ENCODE measurements at regions of chr12 and their contacts with region 1.

Region 1: GRCh38 chr12:26651566-26652188 is 181.3 kb downstream of the ITPR2 start:
- DNase-seq: peak; percentile 88
- ATAC-seq: peak; percentile 73
- H3K4me3 ChIP-seq: no peak overlapping the region
- H3K27ac ChIP-seq: no peak overlapping the region
- H3K4me1 ChIP-seq: peaks cover 9% of the 10 kb centered on the region
- H3K27me3 ChIP-seq: no peaks in the 10 kb centered on the region
- CTCF ChIP-seq: peak; percentile 94
- POLR2A ChIP-seq: no peak
- RAD21 ChIP-seq: peak; percentile 96

Region 2: DNA sequence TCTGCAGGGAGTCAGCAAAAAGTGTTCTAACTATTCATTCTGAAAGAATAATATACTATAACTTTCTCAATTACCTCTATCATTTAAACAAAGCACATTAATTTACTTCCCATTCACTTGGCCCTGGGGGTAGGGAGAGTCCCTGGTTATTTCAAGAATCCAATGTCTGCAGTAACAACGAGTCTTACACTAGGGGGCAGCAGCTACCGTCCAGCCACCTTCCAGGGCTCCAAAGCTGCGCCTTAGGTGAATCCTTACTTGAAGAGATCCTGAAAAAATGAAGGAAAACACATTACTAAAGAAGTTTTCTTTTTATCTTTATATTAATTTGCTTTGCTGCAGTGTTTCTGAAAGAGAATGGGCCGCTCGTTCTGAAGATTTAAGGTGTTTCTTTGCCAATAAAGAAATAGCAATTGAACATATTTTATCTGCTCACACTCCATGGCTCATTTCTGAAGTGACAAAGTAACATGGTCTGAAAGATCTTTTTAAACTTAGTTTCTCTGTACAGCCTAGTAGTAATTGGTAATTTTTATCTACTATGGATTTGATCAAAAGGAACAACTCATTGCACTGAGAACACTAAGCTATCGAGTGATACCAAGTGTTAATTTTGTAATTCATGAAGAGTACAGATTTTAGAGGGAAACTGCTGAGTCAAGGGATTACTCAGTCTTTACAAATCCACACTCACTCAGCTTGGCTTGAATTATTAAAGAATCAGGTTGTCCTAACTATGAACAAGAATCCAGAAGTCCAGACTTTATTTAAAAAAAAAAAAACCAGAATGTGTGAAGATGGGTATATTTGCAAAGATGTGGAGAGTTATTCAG is 554.4 kb before region 1 on chr12:
- CTCF ChIA-PET with region 1: interaction called, 3 read pairs
- POLR2A ChIA-PET with region 1: no interaction called
- dilution Hi-C with region 1: no loop called
- in situ Hi-C with region 1: no loop called
- intact Hi-C with region 1: loop called (anchors 1 kb)
- DNase-seq: peak; percentile 76
- ATAC-seq: peak; percentile 99
- H3K4me3 ChIP-seq: no peak overlapping the region
- H3K27ac ChIP-seq: no peak overlapping the region
- H3K4me1 ChIP-seq: no peaks in the 10 kb centered on the region
- H3K27me3 ChIP-seq: no peaks in the 10 kb centered on the region
- CTCF ChIP-seq: peak; percentile 94
- POLR2A ChIP-seq: 0 out of 2 replicates have a peak, but pooled peaks have one; percentile 41
- RAD21 ChIP-seq: peak; percentile 94

Region 3: GRCh38 chr12:26126340-26127284 is 525.1 kb before region 1 on chr12:
- CTCF ChIA-PET with region 1: interaction called, 5 read pairs
- POLR2A ChIA-PET with region 1: no interaction called
- dilution Hi-C with region 1: no loop called
- in situ Hi-C with region 1: loop called (anchors 10 kb)
- intact Hi-C with region 1: no loop called
- DNase-seq: peak; percentile 80
- ATAC-seq: peak; percentile 70
- H3K4me3 ChIP-seq: peak overlapping the region; percentile 69
- H3K27ac ChIP-seq: no peak overlapping the region; the same call in 1 of the 2 replicates
- H3K4me1 ChIP-seq: no peaks in the 10 kb centered on the region
- H3K27me3 ChIP-seq: peaks cover 29% of the 10 kb centered on the region
- CTCF ChIP-seq: no peak
- POLR2A ChIP-seq: no peak
- RAD21 ChIP-seq: peak; percentile 37

Region 4: DNA sequence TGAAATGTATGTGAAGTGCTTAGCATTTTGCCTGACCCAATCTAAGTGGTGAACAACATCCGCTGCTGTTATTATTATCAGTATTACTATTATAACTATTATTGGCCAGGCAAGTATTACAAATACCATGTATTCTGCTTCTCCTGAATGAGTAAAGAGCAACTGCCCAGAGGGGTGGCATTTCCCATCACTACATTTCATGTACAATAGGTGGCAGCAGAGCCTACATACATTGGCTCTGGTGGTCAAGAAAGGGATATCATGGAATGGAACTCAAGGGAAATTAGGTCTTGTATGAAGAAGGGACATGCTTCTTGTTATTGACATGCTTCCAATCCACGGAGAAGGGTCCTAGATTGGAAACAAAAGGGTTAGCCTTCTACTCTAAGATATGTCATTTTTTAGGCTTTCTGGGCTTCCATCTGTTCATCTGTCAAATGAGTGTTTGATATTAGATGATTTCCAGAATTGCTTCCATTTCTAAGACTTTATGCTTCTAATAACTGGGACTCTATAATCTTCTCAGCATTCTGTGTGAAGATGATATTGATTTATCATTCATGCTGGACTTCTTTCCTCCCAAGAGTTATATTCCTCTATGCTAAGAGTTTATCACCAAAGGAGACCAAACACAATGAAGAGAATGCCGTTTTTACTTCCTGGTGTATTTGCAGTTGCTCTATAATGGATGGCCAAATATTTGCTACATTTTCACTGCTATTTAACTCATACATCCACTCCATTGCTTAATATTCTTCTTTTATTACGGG is 217.2 kb before region 1 on chr12:
- CTCF ChIA-PET with region 1: no interaction called
- POLR2A ChIA-PET with region 1: no interaction called
- dilution Hi-C with region 1: no loop called
- in situ Hi-C with region 1: no loop called
- intact Hi-C with region 1: loop called (anchors 1 kb)
- DNase-seq: peak; percentile 68
- ATAC-seq: peak; percentile 84; the same call in 1 of the 2 replicates
- H3K4me3 ChIP-seq: no peak overlapping the region
- H3K27ac ChIP-seq: no peak overlapping the region
- H3K4me1 ChIP-seq: no peaks in the 10 kb centered on the region
- H3K27me3 ChIP-seq: no peaks in the 10 kb centered on the region
- CTCF ChIP-seq: peak; percentile 81
- POLR2A ChIP-seq: no peak
- RAD21 ChIP-seq: peak; percentile 79

Region 5: GRCh38 chr12:26636710-26637328 is 14.9 kb before region 1 on chr12:
- CTCF ChIA-PET with region 1: no interaction called
- POLR2A ChIA-PET with region 1: no interaction called
- dilution Hi-C with region 1: no loop called
- in situ Hi-C with region 1: no loop called
- intact Hi-C with region 1: no loop called
- DNase-seq: peak; percentile 74
- ATAC-seq: peak; percentile 89
- H3K4me3 ChIP-seq: no peak overlapping the region
- H3K27ac ChIP-seq: no peak overlapping the region
- H3K4me1 ChIP-seq: peaks cover 5% of the 10 kb centered on the region
- H3K27me3 ChIP-seq: no peaks in the 10 kb centered on the region
- CTCF ChIP-seq: no peak
- POLR2A ChIP-seq: no peak
- RAD21 ChIP-seq: no peak

Region 6: DNA sequence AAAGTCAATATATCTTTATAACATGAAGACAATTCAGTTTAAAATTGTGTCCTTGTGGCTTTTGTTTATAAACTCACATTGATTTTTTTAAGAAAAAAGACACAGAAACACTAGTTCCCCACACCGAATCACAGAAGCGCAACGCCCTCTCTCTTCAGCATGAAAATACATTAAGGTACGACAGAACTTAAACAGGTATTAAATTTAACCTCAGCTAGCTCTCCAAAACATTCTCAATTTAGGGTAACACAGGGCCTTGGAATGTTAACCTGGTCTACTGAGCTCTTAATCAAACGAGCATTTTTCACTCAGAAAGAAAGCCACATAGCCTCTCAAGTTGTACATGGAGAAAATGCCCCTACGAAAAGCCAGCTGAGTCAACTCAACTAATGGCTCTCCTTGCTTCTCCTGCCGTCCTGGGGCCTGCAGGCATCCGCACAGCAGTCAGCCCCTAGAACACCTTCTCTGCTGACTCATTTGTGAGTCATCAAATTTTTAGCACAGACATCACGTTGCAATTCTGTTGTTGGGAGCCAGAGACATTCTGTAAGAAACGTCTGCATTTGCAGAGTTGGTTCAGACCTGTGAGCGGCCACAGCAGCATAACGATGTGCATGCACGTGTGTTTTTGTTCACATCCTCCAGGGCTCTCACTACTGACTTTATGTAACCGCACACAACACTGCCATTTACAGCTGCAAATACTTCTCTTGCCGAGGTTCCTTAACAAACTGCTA is 39.7 kb after region 1 on chr12:
- CTCF ChIA-PET with region 1: no interaction called
- POLR2A ChIA-PET with region 1: no interaction called
- dilution Hi-C with region 1: no loop called
- in situ Hi-C with region 1: no loop called
- intact Hi-C with region 1: no loop called
- DNase-seq: peak; percentile 99
- ATAC-seq: peak; percentile 97
- H3K4me3 ChIP-seq: no peak overlapping the region
- H3K27ac ChIP-seq: no peak overlapping the region
- H3K4me1 ChIP-seq: peaks cover 8% of the 10 kb centered on the region
- H3K27me3 ChIP-seq: no peaks in the 10 kb centered on the region
- CTCF ChIP-seq: no peak
- POLR2A ChIP-seq: no peak
- RAD21 ChIP-seq: 0 out of 2 replicates have a peak, but pooled peaks have one; percentile 1